AG04450 (cell line): ENCODE measurements at regions of chr6 and their contacts with region 1.

Region 1: DNA sequence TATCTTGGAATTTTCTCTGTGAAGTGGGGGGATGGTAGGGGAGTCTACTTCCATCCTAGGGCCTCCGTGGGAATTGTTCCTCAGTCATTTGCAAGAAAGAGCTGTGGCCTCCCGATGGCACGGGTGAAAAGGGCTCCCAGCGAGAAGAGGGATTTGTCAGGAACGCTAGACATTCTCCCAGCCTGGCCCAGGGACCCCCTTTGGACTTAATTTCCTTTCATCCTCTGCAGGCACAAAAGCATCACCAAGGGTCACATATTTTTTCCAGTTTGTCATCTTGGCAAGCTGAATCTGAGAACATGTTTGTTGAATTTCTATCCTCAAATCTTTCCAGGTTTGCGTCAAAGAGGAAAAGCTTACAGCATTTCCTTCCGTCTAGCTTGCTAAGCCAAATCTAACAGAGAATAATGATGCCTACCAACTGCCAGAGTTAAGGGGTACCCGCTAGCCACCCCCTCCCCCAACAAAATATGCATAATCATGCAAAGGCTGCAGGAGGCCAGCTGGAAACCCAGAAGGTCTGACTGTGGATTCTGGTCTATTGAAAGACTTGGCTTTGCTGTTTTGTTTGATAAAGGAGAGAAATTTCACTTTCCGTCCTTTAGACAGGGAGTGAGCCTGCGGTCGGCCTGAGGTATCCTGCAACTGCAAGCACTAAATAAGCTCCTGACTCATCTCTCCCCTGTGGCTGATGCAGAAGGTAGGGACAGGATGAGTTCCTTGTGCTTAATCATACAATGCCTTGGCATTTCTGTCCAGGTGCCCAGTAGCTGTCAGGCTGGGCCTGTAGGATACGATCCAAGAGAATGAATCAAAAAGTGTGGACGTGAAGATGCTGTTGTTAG is 23.1 kb downstream of the PSMG4 start:
- DNase-seq: peak; percentile 13
- H3K4me3 ChIP-seq: no peak overlapping the region
- H3K27ac ChIP-seq: peak overlapping the region; percentile 34
- H3K27me3 ChIP-seq: no peaks in the 10 kb centered on the region
- CTCF ChIP-seq: no peak

Region 2: DNA sequence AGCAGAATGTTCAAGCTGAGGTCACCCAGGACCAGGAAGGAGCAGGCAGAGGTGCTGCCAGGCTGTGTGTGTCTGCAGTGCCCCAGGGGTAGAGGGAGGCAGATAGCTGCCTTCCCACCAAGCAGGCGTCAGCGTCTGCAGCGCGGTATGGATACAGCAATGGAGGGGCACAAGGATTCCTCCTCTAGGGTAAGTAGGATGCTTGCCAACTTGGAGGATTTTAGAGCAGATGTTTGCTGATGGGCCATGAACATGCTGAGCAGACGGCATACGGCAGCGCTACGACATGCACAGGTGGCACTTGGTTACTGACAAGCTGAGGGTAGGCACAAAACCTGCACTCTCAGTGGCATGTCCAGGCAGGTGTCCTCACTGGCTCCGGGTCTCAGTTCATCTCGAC is 25.0 kb after region 1 on chr6:
- CTCF ChIA-PET with region 1: no interaction called
- POLR2A ChIA-PET with region 1: no interaction called
- DNase-seq: no peak
- H3K4me3 ChIP-seq: no peak overlapping the region
- H3K27ac ChIP-seq: no peak overlapping the region
- H3K27me3 ChIP-seq: peaks cover 25% of the 10 kb centered on the region
- CTCF ChIP-seq: no peak

Region 3: GRCh38 chr6:3726421-3726820 is 444.6 kb after region 1 on chr6:
- CTCF ChIA-PET with region 1: interaction called, 78 read pairs
- POLR2A ChIA-PET with region 1: no interaction called
- DNase-seq: no peak
- H3K4me3 ChIP-seq: no peak overlapping the region
- H3K27ac ChIP-seq: no peak overlapping the region
- H3K27me3 ChIP-seq: no peaks in the 10 kb centered on the region
- CTCF ChIP-seq: no peak

Region 4: GRCh38 chr6:3732345-3733141 is 450.7 kb after region 1 on chr6:
- CTCF ChIA-PET with region 1: interaction called, 78 read pairs
- POLR2A ChIA-PET with region 1: no interaction called
- DNase-seq: peak; percentile 76
- H3K4me3 ChIP-seq: no peak overlapping the region
- H3K27ac ChIP-seq: peak overlapping the region; percentile 57
- H3K27me3 ChIP-seq: no peaks in the 10 kb centered on the region
- CTCF ChIP-seq: peak; percentile 93